ENCODE measurements at regions of chr1 and their contacts with region 1.

Region 1: GRCh38 chr1:22976461-22977243 is 4.0 kb upstream of the LACTBL1 start:
- DNase-seq: peak; percentile 79
- H3K4me3 ChIP-seq: no peak overlapping the region
- H3K27ac ChIP-seq: no peak overlapping the region
- H3K4me1 ChIP-seq: peaks cover 17% of the 10 kb centered on the region
- H3K27me3 ChIP-seq: no peaks in the 10 kb centered on the region
- CTCF ChIP-seq: peak; percentile 90 to 91

Region 2: DNA sequence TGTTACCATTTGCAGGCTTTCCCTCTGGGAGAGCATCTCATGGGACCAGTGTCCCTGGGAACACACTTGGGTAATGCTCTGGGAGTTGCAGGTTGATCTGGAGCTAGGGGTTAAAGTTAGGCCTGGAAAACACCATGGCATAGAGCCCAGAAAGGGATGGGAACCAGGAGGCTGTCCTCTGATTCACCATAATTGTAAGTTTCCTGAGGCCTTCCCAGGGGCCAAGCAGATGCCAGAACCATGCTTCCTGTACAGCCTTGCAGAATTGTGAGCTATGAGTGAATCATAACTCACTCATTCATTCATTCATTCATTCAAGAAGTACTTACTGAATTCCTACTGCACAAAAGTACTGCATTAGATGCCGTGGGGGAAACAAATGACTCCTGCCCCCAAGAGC is 54.0 kb before region 1 on chr1:
- CTCF ChIA-PET with region 1: no interaction called
- dilution Hi-C with region 1: no loop called
- in situ Hi-C with region 1: no loop called
- intact Hi-C with region 1: no loop called
- DNase-seq: peak; percentile 14
- H3K4me3 ChIP-seq: no peak overlapping the region
- H3K27ac ChIP-seq: no peak overlapping the region
- H3K4me1 ChIP-seq: no peaks in the 10 kb centered on the region
- H3K27me3 ChIP-seq: no peaks in the 10 kb centered on the region
- CTCF ChIP-seq: no peak

Region 3: DNA sequence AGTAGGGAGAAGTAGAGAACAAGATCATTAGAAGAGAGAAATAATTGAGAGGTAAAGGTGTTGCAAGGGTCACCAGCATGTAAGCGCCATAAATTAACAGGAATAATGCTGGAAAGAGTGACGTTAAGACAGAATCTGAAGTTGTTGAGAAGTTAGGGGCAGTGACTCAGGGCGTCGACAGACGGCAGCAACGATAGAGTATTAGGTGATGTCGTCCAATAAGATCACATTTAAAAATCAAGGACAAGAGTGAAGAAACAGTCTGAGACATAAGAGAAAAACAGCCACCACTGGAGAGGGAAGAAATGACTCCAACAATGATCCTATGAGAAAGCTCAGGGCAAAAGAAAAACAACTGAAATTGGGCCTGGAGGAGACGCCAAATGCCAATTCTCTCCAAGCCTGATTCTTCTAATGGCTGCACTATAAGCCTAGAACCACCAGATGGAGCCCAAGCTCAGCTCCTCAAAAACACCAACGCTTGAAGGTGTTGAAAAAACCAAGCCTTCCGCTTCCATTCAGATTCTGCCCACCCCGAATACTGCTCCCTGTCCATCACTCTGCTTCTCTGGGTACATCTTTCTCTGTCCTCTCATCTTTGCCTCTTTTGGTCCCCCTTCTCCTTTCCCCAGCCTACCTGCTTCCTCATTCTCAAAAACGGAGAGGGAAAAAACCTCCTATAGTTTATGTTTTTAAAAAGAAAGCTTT is 122.0 kb after region 1 on chr1:
- CTCF ChIA-PET with region 1: no interaction called
- dilution Hi-C with region 1: no loop called
- in situ Hi-C with region 1: no loop called
- intact Hi-C with region 1: loop called (anchors 1 kb)
- DNase-seq: peak; percentile 65
- H3K4me3 ChIP-seq: no peak overlapping the region
- H3K27ac ChIP-seq: no peak overlapping the region
- H3K4me1 ChIP-seq: peaks cover 59% of the 10 kb centered on the region
- H3K27me3 ChIP-seq: no peaks in the 10 kb centered on the region
- CTCF ChIP-seq: peak; percentile 92 to 93

Region 4: GRCh38 chr1:23216771-23217420 is 240.2 kb after region 1 on chr1:
- CTCF ChIA-PET with region 1: interaction called, 5 read pairs
- dilution Hi-C with region 1: no loop called
- in situ Hi-C with region 1: loop called in 1 of 2 experiments (anchors 10 kb)
- intact Hi-C with region 1: no loop called
- DNase-seq: no peak
- H3K4me3 ChIP-seq: peak overlapping the region; percentile 39 to 50 (median 47)
- H3K27ac ChIP-seq: no peak overlapping the region
- H3K4me1 ChIP-seq: no peaks in the 10 kb centered on the region
- H3K27me3 ChIP-seq: no peaks in the 10 kb centered on the region
- CTCF ChIP-seq: peak; percentile 21 to 54

Region 5: GRCh38 chr1:23484253-23485001 is 507.8 kb after region 1 on chr1:
- CTCF ChIA-PET with region 1: no interaction called
- dilution Hi-C with region 1: no loop called
- in situ Hi-C with region 1: no loop called
- intact Hi-C with region 1: loop called (anchors 5 kb)
- DNase-seq: peak; percentile 88
- H3K4me3 ChIP-seq: peak overlapping the region; percentile 23 to 83 (median 68)
- H3K27ac ChIP-seq: peak overlapping the region; percentile 29
- H3K4me1 ChIP-seq: peaks cover 9% of the 10 kb centered on the region
- H3K27me3 ChIP-seq: no peaks in the 10 kb centered on the region
- CTCF ChIP-seq: no peak

Region 6: DNA sequence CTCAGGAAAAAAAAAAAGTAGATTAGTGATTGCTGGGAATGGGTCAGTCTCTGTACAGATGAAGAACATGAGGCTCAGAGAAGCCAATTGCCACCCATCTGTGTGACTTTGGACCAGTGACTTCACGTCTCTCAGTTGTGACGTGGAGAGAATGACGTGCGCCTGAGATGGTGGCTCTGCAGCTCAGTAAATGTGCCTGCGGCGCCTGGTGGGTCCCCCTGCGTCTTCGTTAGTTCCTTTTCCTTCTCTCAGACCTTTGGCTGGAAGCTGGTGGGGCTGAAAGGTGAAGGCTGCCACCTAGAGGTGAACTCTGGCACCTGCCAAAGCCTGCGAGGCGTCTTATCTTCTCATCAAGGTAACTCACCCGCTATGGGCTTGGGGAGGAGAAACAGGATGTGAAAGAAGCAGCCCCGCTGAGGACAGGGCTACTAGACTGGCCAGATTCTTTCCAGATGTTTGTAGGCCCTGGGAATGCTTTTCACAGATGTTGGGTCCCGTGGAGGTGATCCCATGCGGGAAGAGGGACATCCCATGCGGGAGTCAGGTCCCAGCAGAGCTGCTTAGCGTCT is 563.1 kb after region 1 on chr1:
- CTCF ChIA-PET with region 1: no interaction called
- dilution Hi-C with region 1: no loop called
- in situ Hi-C with region 1: loop called in 1 of 2 experiments (anchors 5 kb)
- intact Hi-C with region 1: loop called (anchors 1 kb)
- DNase-seq: peak; percentile 87
- H3K4me3 ChIP-seq: no peak overlapping the region
- H3K27ac ChIP-seq: no peak overlapping the region
- H3K4me1 ChIP-seq: peaks cover 8% of the 10 kb centered on the region
- H3K27me3 ChIP-seq: no peaks in the 10 kb centered on the region
- CTCF ChIP-seq: peak; percentile 95 to 98